ENCODE measurements at regions of chrX and their contacts with region 1.

Region 1: DNA sequence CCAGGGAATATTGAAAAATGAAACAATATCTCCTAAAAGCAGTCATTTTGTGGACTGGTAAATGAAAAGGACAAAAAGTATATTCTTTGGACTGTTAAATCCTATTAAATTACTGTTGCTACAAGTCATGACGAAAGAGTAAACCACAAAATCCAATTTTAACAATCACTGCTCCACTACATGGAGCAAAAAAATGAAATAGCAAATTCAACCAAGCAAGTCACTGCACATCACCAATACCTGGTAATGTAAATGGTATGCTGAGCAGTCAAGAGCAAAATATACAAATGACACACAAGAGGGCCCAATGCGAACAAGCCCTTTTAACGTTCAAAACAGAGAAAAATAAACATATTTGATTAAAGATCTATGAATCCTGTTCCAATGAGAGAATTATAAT is 126.2 kb downstream of the KLHL13 start:
- DNase-seq: no peak
- H3K4me3 ChIP-seq: no peak overlapping the region
- H3K27ac ChIP-seq: no peak overlapping the region
- H3K4me1 ChIP-seq: no peaks in the 10 kb centered on the region
- H3K27me3 ChIP-seq: no peaks in the 10 kb centered on the region
- CTCF ChIP-seq: no peak
- POLR2A ChIP-seq: no peak

Region 2: DNA sequence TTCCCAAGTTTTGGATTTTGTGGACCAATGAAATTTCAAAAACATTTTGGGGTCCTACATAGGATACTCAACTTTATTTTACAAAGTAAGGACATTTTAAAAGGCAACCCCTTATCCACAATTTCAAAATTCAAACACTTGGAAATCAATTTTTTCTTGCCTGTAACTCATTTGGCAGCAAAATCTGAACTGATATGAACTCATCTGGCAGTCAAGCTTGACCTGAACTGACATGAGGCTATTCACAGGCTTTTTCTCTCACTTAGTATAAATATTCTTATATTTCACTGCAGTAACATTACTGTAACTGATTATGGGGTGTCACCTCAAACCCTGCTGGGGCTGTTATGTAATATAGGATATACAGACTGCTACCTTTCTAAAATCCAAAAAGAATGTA is 10.1 kb after region 1 on chrX:
- CTCF ChIA-PET with region 1: no interaction called
- POLR2A ChIA-PET with region 1: no interaction called
- dilution Hi-C with region 1: no loop called
- intact Hi-C with region 1: no loop called
- DNase-seq: no peak
- H3K4me3 ChIP-seq: no peak overlapping the region
- H3K27ac ChIP-seq: no peak overlapping the region
- H3K4me1 ChIP-seq: no peaks in the 10 kb centered on the region
- H3K27me3 ChIP-seq: no peaks in the 10 kb centered on the region
- CTCF ChIP-seq: no peak
- POLR2A ChIP-seq: no peak

Region 3: GRCh38 chrX:118025226-118025625 is 34.8 kb after region 1 on chrX:
- CTCF ChIA-PET with region 1: no interaction called
- POLR2A ChIA-PET with region 1: no interaction called
- dilution Hi-C with region 1: no loop called
- intact Hi-C with region 1: no loop called
- DNase-seq: no peak
- H3K4me3 ChIP-seq: no peak overlapping the region
- H3K27ac ChIP-seq: no peak overlapping the region
- H3K4me1 ChIP-seq: no peaks in the 10 kb centered on the region
- H3K27me3 ChIP-seq: no peaks in the 10 kb centered on the region
- CTCF ChIP-seq: no peak
- POLR2A ChIP-seq: no peak

Region 4: GRCh38 chrX:118116713-118117550 is 126.5 kb after region 1 on chrX and contains the start of gene KLHL13:
- CTCF ChIA-PET with region 1: interaction called, 3 read pairs
- POLR2A ChIA-PET with region 1: no interaction called
- dilution Hi-C with region 1: no loop called
- intact Hi-C with region 1: loop called (anchors 5 kb)
- DNase-seq: peak; percentile 51
- H3K4me3 ChIP-seq: peak within 1 kb of the TSS; percentile 49 to 86 (median 76)
- H3K27ac ChIP-seq: peak within 1 kb of the TSS; percentile 68
- H3K4me1 ChIP-seq: peaks cover 6% of the 10 kb centered on the region
- H3K27me3 ChIP-seq: no peaks in the 10 kb centered on the region
- CTCF ChIP-seq: no peak
- POLR2A ChIP-seq: no peak
- total RNA-seq, gene KLHL13: 15.3 and 19.0 TPM in 2 replicates

Measured in endothelial cell of umbilical vein (primary cell).